A549 (cell line): ENCODE measurements at regions of chr10 and their contacts with region 1.

Region 1: GRCh38 chr10:69914398-69915214 is 112.9 kb downstream of the COL13A1 start:
- DNase-seq: peak; percentile 65 to 74
- ATAC-seq: peak; percentile 87 to 97
- H3K4me3 ChIP-seq: no peak overlapping the region
- H3K27ac ChIP-seq: no peak overlapping the region
- H3K4me1 ChIP-seq: no peaks in the 10 kb centered on the region
- CTCF ChIP-seq: peak; percentile 92
- EP300 ChIP-seq: no peak
- POLR2A ChIP-seq: no peak
- RAD21 ChIP-seq: peak; percentile 91 to 92

Region 2: GRCh38 chr10:69639291-69640195 is 275.1 kb before region 1 on chr10:
- CTCF ChIA-PET with region 1: interaction called, 93 read pairs
- POLR2A ChIA-PET with region 1: no interaction called
- DNase-seq: peak; percentile 73 to 80
- ATAC-seq: peak; percentile 58 to 84
- H3K4me3 ChIP-seq: no peak overlapping the region
- H3K27ac ChIP-seq: no peak overlapping the region
- H3K4me1 ChIP-seq: no peaks in the 10 kb centered on the region
- CTCF ChIP-seq: peak; percentile 95
- EP300 ChIP-seq: no peak
- POLR2A ChIP-seq: no peak
- RAD21 ChIP-seq: peak; percentile 93

Region 3: GRCh38 chr10:69742928-69743602 is 171.5 kb before region 1 on chr10:
- CTCF ChIA-PET with region 1: interaction called, 10 read pairs
- POLR2A ChIA-PET with region 1: no interaction called
- DNase-seq: peak in 1 of 2 experiments; percentile 43
- ATAC-seq: peak; percentile 56 to 91; a peak in 5 of 6 replicates
- H3K4me3 ChIP-seq: no peak overlapping the region
- H3K27ac ChIP-seq: no peak overlapping the region
- H3K4me1 ChIP-seq: no peaks in the 10 kb centered on the region
- CTCF ChIP-seq: peak; percentile 39
- EP300 ChIP-seq: no peak
- POLR2A ChIP-seq: no peak
- RAD21 ChIP-seq: peak; percentile 33 to 60; a peak in 3 of 5 replicates

Region 4: DNA sequence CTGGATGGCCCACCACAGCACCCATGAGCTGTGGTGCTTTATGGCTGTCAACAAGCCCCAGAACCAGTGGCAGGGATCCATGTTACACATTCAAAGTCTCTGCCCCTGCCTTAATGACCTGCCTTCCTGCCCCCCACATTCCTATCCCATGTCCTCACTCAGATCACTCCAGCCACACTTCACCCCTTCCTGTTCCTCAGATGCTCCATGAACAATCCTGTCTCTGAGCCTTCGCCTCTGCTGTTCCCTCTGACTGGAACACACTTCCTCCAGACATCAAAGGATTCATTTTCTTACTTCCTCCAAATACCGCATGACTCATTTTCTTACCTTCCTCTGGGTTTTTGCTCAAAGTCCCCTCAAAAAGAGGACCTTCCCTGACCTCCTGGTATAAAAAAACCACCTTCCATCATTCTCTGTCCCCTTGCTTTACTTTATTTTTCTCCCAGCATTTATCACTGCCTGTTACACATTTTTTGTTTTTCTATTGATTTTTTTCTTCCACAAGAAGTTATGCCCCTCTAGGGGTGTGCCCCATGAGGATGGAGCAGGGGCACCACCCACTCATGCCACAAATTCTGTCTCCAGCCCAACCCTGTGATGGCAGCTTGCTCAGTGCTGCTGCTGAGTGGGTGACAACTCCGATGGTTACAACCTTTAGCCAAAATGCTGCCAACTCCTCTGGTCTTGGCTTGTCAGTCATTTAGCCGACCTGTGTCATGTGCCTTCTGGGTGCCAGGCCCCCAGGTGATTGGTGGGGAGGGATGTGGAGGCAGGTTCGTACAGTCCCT is 94.7 kb before region 1 on chr10:
- CTCF ChIA-PET with region 1: interaction called, 16 read pairs
- POLR2A ChIA-PET with region 1: no interaction called
- DNase-seq: no peak
- ATAC-seq: no peak
- H3K4me3 ChIP-seq: no peak overlapping the region
- H3K27ac ChIP-seq: no peak overlapping the region
- H3K4me1 ChIP-seq: no peaks in the 10 kb centered on the region
- CTCF ChIP-seq: no peak
- EP300 ChIP-seq: no peak
- POLR2A ChIP-seq: no peak
- RAD21 ChIP-seq: no peak

Region 5: DNA sequence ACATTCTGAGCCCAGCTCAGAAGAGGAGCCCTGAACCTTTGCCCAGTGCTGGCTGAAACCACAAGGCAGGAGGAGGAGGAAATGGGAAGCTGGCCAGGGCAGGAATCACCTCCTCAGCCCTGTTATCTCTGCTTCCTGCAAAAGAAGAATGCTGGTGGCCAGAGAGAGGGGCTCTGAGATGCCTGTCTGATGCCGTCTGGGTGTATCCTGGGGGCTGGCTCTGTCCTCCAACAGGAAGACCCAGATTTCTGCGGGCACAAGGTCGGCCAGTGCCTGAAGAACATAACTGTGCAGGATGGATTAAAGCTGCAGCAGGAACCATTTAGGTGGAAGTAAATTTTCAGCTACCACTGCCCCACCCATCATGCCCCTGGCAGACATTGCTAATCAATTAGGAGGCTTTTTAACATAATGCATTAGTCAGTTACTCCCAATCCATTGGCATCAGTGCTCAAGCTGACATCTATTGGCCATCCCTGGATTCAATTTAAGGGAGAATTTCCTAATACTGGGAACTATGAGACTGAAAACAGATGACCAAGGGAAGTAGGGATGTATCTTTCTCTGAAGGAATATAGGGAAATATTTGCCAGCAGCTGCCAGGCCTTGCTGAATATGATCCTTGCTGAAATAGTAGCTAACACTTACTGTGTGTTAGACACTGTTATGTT is 45.2 kb before region 1 on chr10:
- CTCF ChIA-PET with region 1: interaction called, 103 read pairs
- POLR2A ChIA-PET with region 1: no interaction called
- DNase-seq: no peak
- ATAC-seq: peak in 1 of 2 experiments; percentile 36; a peak in 3 of 6 replicates
- H3K4me3 ChIP-seq: no peak overlapping the region
- H3K27ac ChIP-seq: peak overlapping the region in 1 of 2 experiments; percentile 69; a peak in 3 of 6 replicates
- H3K4me1 ChIP-seq: peaks cover 26% of the 10 kb centered on the region
- CTCF ChIP-seq: no peak
- EP300 ChIP-seq: no peak
- POLR2A ChIP-seq: no peak
- RAD21 ChIP-seq: no peak

Region 6: GRCh38 chr10:69936091-69936490 is 21.5 kb after region 1 on chr10:
- CTCF ChIA-PET with region 1: interaction called, 17 read pairs
- POLR2A ChIA-PET with region 1: no interaction called
- DNase-seq: peak in 1 of 2 experiments; percentile 21
- ATAC-seq: peak; percentile 65 to 79; a peak in 4 of 6 replicates
- H3K4me3 ChIP-seq: no peak overlapping the region
- H3K27ac ChIP-seq: no peak overlapping the region
- H3K4me1 ChIP-seq: no peaks in the 10 kb centered on the region
- CTCF ChIP-seq: no peak
- EP300 ChIP-seq: no peak
- POLR2A ChIP-seq: no peak
- RAD21 ChIP-seq: peak in 1 of 2 experiments; percentile 41; a peak in 1 of 5 replicates